OCI-LY7 (cell line): ENCODE measurements at regions of chr9 and their contacts with region 1.

Region 1: DNA sequence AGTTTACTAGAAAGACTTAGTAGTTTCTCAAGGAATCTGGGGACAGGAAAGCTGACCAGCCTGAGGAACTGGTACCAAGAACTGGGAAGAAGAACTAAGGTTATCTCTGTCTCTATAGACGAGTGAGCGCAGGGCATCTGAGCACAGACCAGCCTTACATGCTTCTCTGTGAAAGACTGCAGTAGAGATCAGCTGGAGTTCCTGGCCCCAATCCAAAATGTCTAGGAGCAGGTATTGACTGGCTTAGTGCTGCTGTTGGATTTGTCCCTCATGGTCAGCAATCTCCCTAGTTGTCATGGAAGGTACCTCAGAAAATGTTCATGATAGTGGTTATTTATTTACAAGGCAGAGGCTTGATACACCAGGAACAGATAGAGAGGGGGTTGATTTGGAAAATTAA is 13.3 kb downstream of the NUP214 start:
- DNase-seq: no peak
- H3K4me3 ChIP-seq: no peak overlapping the region
- H3K27ac ChIP-seq: no peak overlapping the region
- H3K4me1 ChIP-seq: no peaks in the 10 kb centered on the region
- CTCF ChIP-seq: no peak

Region 2: GRCh38 chr9:131169563-131170240 is 31.0 kb after region 1 on chr9:
- CTCF ChIA-PET with region 1: interaction called, 3 read pairs
- POLR2A ChIA-PET with region 1: no interaction called
- intact Hi-C with region 1: loop called (anchors 2 kb)
- DNase-seq: no peak
- H3K4me3 ChIP-seq: no peak overlapping the region
- H3K27ac ChIP-seq: no peak overlapping the region
- H3K4me1 ChIP-seq: no peaks in the 10 kb centered on the region
- CTCF ChIP-seq: no peak

Region 3: GRCh38 chr9:131235480-131235851 is 96.8 kb after region 1 on chr9:
- CTCF ChIA-PET with region 1: no interaction called
- POLR2A ChIA-PET with region 1: no interaction called
- intact Hi-C with region 1: no loop called
- DNase-seq: no peak
- H3K4me3 ChIP-seq: no peak overlapping the region
- H3K27ac ChIP-seq: no peak overlapping the region
- H3K4me1 ChIP-seq: peaks cover 9% of the 10 kb centered on the region
- CTCF ChIP-seq: no peak

Region 4: GRCh38 chr9:131290039-131290766 is 151.5 kb after region 1 on chr9:
- CTCF ChIA-PET with region 1: no interaction called
- POLR2A ChIA-PET with region 1: no interaction called
- intact Hi-C with region 1: no loop called
- DNase-seq: no peak
- H3K4me3 ChIP-seq: no peak overlapping the region
- H3K27ac ChIP-seq: no peak overlapping the region
- H3K4me1 ChIP-seq: no peaks in the 10 kb centered on the region
- CTCF ChIP-seq: no peak

Region 5: DNA sequence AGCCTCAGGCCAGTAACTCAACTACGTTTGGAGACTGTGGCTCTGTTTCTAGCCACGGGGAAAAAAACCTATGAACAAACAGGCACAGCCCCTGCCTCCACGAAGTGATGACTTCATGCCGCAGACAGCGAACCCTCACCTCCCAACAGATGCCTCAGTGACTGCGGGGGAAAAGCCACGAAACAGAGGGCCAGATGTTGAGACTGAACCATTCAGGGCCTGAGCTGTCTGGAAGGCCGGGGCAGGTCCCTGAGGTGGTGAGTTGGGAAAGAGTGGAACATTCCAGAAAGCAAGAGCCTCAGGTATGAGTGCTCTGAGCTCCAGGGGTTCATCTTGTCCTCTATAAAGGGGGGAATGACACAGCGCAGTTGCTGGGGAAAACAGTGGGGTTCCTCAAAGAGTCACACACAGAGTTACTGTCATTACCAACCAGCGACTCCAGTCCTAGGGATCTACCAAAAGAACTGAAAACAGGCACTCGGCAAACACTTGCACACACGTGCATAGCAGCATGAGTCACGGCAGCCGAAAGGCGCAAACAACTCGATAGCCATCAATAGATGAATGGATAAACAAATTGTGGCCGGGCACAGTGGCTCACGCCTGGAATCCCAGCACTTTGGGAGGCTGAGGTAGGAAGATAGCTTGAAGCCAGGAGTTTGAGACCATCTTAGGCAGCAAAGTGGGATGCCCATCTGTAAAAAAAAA is 166.2 kb after region 1 on chr9:
- CTCF ChIA-PET with region 1: no interaction called
- POLR2A ChIA-PET with region 1: no interaction called
- intact Hi-C with region 1: no loop called
- DNase-seq: no peak
- H3K4me3 ChIP-seq: no peak overlapping the region
- H3K27ac ChIP-seq: no peak overlapping the region
- H3K4me1 ChIP-seq: no peaks in the 10 kb centered on the region
- CTCF ChIP-seq: no peak

Region 6: DNA sequence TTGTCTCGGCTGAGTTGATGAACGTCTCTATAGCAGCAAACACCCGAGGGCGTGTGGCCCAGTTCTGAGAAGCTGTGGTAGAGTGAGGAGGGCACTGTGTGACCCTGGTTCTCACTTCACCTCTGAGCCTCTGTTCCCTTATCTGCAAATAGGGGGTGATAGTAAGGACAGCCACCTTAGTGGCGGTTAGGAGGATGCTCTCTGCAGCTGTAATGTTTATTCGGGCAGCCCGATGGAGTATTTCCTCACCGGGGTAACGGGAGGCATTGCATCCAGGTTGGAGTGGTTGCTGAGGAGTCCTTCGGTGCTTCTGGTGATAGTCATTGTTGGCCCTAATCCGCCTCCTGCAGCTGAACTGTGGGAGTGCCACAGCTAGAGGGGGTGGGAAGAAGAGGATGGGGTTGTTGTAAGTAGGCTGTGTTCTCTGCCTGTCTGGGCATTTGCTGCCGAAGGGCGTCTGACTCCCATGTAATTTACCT is 269.1 kb after region 1 on chr9:
- CTCF ChIA-PET with region 1: no interaction called
- POLR2A ChIA-PET with region 1: no interaction called
- intact Hi-C with region 1: no loop called
- DNase-seq: no peak
- H3K4me3 ChIP-seq: peak overlapping the region; percentile 6
- H3K27ac ChIP-seq: peak overlapping the region; percentile 25
- H3K4me1 ChIP-seq: peaks cover 71% of the 10 kb centered on the region
- CTCF ChIP-seq: peak; percentile 44